Right lobe of liver (tissue), 6 donors: ENCODE measurements at regions of chr4 and their contacts with region 1.

Region 1: GRCh38 chr4:1726146-1726934 is 5.0 kb downstream of the TACC3 start:
- DNase-seq: peak; percentile 88 to 91 (median 89)
- ATAC-seq: peak; percentile 73 to 80 (median 76)
- H3K4me3 ChIP-seq: no peak overlapping the region
- H3K27ac ChIP-seq: peak overlapping the region in 2 of 3 donors; percentile 10 to 24
- H3K4me1 ChIP-seq: peaks cover 0 to 14% (median 0%) of the 10 kb centered on the region in 4 donors
- H3K27me3 ChIP-seq: no peaks in the 10 kb centered on the region
- CTCF ChIP-seq: peak; percentile 94 to 100 (median 98)
- POLR2A ChIP-seq: no peak

Region 2: DNA sequence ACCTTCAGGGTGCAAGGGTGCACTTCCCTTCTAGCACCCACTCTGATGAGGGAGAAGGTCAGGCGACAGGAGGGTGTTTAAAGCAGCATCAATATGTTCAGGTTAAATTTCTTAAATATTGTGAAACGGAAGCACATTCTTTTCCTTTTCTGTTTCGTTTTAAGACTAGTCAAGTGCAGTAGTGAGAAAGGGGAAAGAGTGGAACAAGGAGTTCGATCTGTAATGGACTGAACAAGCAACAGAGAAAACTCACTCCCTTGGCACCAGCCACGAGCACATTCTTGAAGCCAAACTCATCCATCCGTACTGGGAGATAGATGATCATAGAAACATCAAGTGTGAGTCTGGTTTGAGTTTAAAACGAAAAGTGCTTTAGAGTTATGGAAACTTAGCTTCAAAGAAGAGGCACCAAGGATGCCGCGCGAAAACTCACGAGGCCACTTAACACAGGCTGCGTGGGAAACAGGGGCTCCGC is 43.0 kb before region 1 on chr4:
- intact Hi-C with region 1: no loop called
- DNase-seq: no peak
- ATAC-seq: peak in 1 of 4 donors; percentile 6
- H3K4me3 ChIP-seq: peak overlapping the region; percentile 54 to 67 (median 61)
- H3K27ac ChIP-seq: peak overlapping the region; percentile 2 to 47 (median 39)
- H3K4me1 ChIP-seq: peaks cover 0 to 18% (median 0%) of the 10 kb centered on the region in 4 donors
- H3K27me3 ChIP-seq: no peaks in the 10 kb centered on the region
- CTCF ChIP-seq: no peak
- POLR2A ChIP-seq: no peak

Region 3: DNA sequence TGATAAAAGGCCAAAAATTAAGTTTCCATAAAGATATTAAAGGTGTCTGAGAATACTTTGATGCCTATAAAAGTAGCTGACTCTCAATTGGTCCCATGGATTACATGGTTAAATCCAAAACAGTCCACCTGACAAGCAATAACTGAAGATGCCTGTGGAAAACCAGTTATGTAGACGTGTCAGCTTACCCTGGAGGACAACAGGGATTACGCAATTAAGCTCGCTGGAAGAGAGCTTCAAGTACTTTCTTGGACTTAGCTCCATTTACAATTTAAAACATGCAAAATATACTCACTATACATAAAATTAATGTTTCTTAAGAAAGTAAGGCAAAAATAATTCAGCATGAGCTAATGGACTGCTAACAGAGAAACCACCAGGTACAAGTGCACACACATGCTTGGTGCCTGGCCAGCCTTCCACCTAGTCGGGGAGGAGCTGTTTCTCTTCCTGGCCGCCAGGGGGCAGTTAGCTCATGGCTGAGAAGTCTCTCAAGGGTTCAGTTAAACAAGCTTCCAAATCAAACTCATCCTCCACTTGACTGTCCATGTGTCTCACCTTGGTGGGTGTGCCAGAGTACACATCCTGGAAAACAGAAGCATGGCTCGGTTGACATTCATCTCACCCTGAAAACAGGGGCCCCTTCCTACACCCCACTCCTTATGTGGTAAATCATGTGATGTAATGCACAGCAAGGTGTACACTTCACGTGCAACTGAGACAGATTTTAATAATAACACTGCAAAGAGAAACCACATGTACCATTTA is 33.0 kb before region 1 on chr4:
- intact Hi-C with region 1: loop called in 1 of 2 experiments (anchors 5 kb)
- DNase-seq: peak; percentile 79 to 86 (median 82)
- ATAC-seq: peak; percentile 97 to 100 (median 98)
- H3K4me3 ChIP-seq: no peak overlapping the region
- H3K27ac ChIP-seq: no peak overlapping the region
- H3K4me1 ChIP-seq: no peaks in the 10 kb centered on the region
- H3K27me3 ChIP-seq: no peaks in the 10 kb centered on the region
- CTCF ChIP-seq: peak; percentile 90 to 99 (median 98)
- POLR2A ChIP-seq: no peak

Region 4: GRCh38 chr4:2059034-2059725 is 332.8 kb after region 1 on chr4 and contains the start of gene NAT8L:
- intact Hi-C with region 1: no loop called
- DNase-seq: peak in 2 of 3 donors; percentile 20 to 43
- ATAC-seq: peak in 2 of 4 donors; percentile 24 to 31
- H3K4me3 ChIP-seq: peak within 1 kb of the TSS in 1 of 3 donors; percentile 19
- H3K27ac ChIP-seq: no peak within 1 kb of the TSS
- H3K4me1 ChIP-seq: no peaks in the 10 kb centered on the region
- H3K27me3 ChIP-seq: peaks cover 0 to 10% of the 10 kb centered on the region in 2 donors
- CTCF ChIP-seq: no peak
- POLR2A ChIP-seq: no peak
- total RNA-seq, gene NAT8L: 0.02 to 0.05 TPM in 2 of 6 experiments, not detected in the others